AG04450 (cell line): ENCODE measurements at regions of chr21 and their contacts with region 1.

Region 1: GRCh38 chr21:33441489-33442477 is 38.0 kb downstream of the TMEM50B start:
- DNase-seq: peak; percentile 51
- H3K4me3 ChIP-seq: no peak overlapping the region
- H3K27ac ChIP-seq: peak overlapping the region; percentile 43
- H3K27me3 ChIP-seq: no peaks in the 10 kb centered on the region
- CTCF ChIP-seq: no peak

Region 2: DNA sequence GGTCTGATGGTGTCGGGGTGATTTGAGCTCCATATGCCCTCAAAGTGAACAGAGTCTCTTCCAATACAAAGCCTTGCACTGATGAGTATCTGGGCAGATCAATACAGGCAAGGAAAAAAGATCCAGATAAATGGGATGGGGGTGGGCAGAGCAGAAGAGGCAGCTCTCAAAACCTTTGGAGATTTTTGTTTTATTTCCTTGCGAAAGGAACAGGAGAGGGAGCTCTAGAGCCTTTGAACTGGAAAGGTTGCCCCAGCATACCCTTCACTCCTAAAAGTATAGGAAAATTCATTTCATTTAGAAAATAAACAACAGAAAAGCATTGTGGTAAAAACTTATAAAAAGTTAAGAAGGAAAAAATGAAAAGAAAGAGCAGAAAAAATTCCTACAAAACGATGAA is 447.5 kb before region 1 on chr21:
- CTCF ChIA-PET with region 1: interaction called, 11 read pairs
- POLR2A ChIA-PET with region 1: no interaction called
- DNase-seq: no peak
- H3K4me3 ChIP-seq: no peak overlapping the region
- H3K27ac ChIP-seq: no peak overlapping the region
- H3K27me3 ChIP-seq: peaks cover 12% of the 10 kb centered on the region
- CTCF ChIP-seq: peak; percentile 65

Region 3: GRCh38 chr21:33458861-33459260 is 17.1 kb after region 1 on chr21:
- CTCF ChIA-PET with region 1: interaction called, 10 read pairs
- POLR2A ChIA-PET with region 1: no interaction called
- DNase-seq: no peak
- H3K4me3 ChIP-seq: no peak overlapping the region
- H3K27ac ChIP-seq: no peak overlapping the region
- H3K27me3 ChIP-seq: no peaks in the 10 kb centered on the region
- CTCF ChIP-seq: no peak

Region 4: GRCh38 chr21:33682992-33683627 is 241.3 kb after region 1 on chr21:
- CTCF ChIA-PET with region 1: no interaction called
- POLR2A ChIA-PET with region 1: no interaction called
- DNase-seq: peak; percentile 39
- H3K4me3 ChIP-seq: no peak overlapping the region
- H3K27ac ChIP-seq: no peak overlapping the region
- H3K27me3 ChIP-seq: no peaks in the 10 kb centered on the region
- CTCF ChIP-seq: no peak

Region 5: DNA sequence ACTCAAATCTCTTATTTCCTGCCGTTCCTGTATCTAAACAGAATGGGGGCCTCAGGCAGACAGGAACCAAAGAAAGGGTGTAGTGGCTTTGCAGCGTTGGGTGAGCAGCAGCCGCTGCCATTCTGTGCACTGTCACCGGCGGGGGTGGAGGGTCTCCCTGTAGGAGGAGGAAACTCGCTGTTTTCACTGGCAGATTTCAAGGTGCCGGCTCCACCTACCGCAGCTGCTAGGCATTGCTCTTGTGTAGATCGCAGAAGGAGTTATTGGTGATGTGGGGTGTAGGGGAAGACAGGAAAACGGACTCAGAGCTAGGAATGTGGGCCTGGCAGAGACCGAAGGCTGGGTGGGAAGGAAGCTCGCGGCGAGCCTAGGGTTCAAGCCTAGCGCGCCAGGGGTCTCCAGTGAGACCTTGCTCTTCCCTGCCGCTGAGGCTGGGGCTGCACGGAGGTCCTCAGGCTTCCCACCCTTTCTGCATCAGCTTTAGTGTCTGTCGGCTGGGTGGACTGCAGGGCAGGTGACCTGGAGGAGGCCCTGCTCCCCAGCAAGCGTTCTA is 453.0 kb after region 1 on chr21:
- CTCF ChIA-PET with region 1: no interaction called
- POLR2A ChIA-PET with region 1: no interaction called
- DNase-seq: peak; percentile 75
- H3K4me3 ChIP-seq: peak overlapping the region; percentile 46
- H3K27ac ChIP-seq: no peak overlapping the region
- H3K27me3 ChIP-seq: peaks cover 3% of the 10 kb centered on the region
- CTCF ChIP-seq: peak; percentile 88